HEK293 (cell line): ENCODE measurements at regions of chr6 and their contacts with region 1.

Region 1: DNA sequence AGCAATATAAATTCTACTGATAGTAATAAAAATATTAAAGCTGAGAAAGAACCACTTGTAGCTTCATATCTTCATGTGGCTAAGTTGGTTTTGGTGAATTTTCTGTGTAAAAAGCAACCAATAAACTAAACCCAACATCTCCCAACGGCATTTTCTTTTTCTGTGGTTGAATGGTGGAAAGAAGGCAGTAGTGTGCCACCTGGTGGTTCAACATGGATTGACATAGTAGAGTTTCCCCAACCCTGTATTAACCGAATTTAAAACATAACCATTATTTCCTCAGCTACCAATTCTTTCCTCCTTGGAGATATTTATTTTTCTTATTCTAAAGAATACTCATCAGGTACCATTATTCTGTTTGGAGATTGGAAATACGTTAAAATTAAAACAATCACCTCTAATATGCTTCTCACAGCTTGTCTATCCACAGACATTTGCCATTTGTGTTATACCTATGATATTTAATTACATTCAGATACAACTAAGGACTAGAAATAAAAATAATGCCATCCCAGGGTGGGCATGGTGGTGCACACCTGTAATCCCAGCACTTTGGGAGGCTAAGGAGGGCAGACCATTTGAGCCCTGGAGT is 117.1 kb upstream of the EEF1E1 start:
- H3K4me3 ChIP-seq: no peak overlapping the region
- H3K27ac ChIP-seq: no peak overlapping the region
- H3K4me1 ChIP-seq: no peaks in the 10 kb centered on the region
- CTCF ChIP-seq: 0 out of 2 replicates have a peak, but pooled peaks have one; percentile 25

Region 2: DNA sequence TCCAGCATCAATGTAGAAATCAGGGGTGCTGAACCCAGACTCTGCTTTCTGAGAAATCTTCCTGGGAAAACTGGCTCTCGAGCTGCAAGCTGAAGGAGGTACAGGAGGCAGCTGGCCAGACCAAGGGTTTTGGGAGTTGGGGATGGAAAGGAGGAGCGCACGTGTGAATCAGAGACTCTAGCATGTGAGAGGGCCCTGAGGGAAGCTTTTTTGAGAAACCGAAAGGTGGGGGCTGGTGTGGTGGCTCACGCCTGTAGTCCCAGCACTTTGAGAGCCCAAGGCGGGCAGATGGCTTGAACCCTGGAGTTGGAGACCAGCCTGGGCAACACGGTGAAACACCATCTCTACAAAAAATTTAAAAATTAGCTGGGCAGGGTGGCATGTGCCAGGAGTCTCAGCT is 80.0 kb before region 1 on chr6:
- CTCF ChIA-PET with region 1: interaction called, 475 read pairs
- POLR2A ChIA-PET with region 1: no interaction called
- H3K4me3 ChIP-seq: no peak overlapping the region
- H3K27ac ChIP-seq: no peak overlapping the region
- H3K4me1 ChIP-seq: no peaks in the 10 kb centered on the region
- CTCF ChIP-seq: no peak

Region 3: GRCh38 chr6:8155259-8156012 is 64.0 kb before region 1 on chr6:
- CTCF ChIA-PET with region 1: interaction called, 10 read pairs
- POLR2A ChIA-PET with region 1: no interaction called
- H3K4me3 ChIP-seq: no peak overlapping the region
- H3K27ac ChIP-seq: no peak overlapping the region
- H3K4me1 ChIP-seq: no peaks in the 10 kb centered on the region
- CTCF ChIP-seq: no peak

Region 4: DNA sequence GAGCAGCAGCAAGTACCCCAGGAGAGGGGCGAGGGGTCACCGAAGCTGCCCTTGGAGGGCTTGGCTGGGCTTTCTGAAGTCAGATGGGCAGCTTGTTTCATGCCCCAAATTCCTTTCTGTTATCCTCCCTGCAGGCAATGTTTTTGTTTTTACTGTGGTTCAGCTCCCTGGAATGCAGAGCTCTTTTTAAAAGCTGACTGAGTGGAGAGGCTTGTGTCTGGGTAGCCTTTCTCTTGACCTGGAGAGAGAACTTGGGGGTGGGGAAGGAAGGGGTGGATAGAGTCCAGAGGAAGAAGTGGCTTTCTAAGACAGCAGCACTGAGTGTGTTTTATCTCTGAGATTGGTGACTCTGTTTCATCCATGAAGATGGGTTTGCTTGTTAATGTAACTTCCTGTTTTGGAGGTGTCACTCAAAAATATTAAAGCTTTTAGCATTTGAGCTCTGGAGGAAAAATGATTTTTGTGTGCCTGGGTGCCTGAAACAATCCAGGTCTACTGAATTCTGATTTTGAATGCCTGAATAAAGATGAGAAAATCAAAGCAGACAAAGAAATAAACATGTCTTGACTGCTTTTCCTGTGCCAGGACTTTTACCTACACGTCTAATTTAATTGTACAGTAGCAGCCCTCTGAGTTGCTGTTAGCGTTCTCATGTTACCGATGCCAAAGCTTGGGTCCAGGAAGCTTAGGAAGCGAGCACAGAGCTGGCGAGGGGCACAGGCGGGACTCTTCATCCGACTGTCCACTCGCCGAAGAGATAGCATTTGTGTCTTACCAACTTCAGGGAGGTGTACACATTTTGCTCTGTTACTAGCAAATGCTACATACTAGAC is 38.9 kb before region 1 on chr6:
- CTCF ChIA-PET with region 1: interaction called, 14 read pairs
- POLR2A ChIA-PET with region 1: no interaction called
- H3K4me3 ChIP-seq: no peak overlapping the region
- H3K27ac ChIP-seq: no peak overlapping the region
- H3K4me1 ChIP-seq: peaks cover 10% of the 10 kb centered on the region; the same call in 1 of the 2 replicates
- CTCF ChIP-seq: no peak

Region 5: DNA sequence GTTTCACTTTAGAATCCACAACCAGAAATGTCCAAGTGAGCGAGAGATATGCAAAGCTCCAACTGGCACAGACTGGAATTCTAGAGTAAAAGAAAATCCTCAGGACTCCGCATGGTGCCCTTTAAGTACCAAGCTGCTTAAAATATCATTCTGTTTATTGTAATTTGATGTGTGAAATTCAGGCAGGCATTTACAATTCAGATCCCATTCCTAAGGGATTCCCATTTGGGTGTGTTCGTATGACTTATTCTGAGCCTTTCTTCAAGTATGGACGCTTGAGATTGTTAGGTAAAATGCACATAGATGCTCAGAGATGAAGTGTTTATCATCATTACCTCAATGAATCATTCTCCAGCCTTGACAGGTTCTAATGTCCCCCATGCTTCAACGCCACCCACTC is 17.8 kb before region 1 on chr6:
- CTCF ChIA-PET with region 1: interaction called, 44 read pairs
- POLR2A ChIA-PET with region 1: no interaction called
- H3K4me3 ChIP-seq: no peak overlapping the region
- H3K27ac ChIP-seq: no peak overlapping the region
- H3K4me1 ChIP-seq: no peaks in the 10 kb centered on the region
- CTCF ChIP-seq: no peak

Region 6: GRCh38 chr6:8229915-8230756 is 10.7 kb after region 1 on chr6:
- CTCF ChIA-PET with region 1: interaction called, 39 read pairs
- POLR2A ChIA-PET with region 1: no interaction called
- H3K4me3 ChIP-seq: no peak overlapping the region
- H3K27ac ChIP-seq: no peak overlapping the region
- H3K4me1 ChIP-seq: no peaks in the 10 kb centered on the region
- CTCF ChIP-seq: no peak